Endothelial cell of umbilical vein (primary cell): ENCODE measurements at regions of chr3 and their contacts with region 1.

Region 1: GRCh38 chr3:113838631-113839209 is at the start of gene GRAMD1C:
- DNase-seq: peak; percentile 91
- H3K4me3 ChIP-seq: peak within 1 kb of the TSS; percentile 67 to 80 (median 69)
- H3K27ac ChIP-seq: peak within 1 kb of the TSS; percentile 83
- H3K4me1 ChIP-seq: no peaks in the 10 kb centered on the region
- H3K27me3 ChIP-seq: no peaks in the 10 kb centered on the region
- CTCF ChIP-seq: peak; percentile 85 to 93
- POLR2A ChIP-seq: peak; percentile 61
- total RNA-seq, gene GRAMD1C: 17.0 and 24.0 TPM in 2 replicates

Region 2: DNA sequence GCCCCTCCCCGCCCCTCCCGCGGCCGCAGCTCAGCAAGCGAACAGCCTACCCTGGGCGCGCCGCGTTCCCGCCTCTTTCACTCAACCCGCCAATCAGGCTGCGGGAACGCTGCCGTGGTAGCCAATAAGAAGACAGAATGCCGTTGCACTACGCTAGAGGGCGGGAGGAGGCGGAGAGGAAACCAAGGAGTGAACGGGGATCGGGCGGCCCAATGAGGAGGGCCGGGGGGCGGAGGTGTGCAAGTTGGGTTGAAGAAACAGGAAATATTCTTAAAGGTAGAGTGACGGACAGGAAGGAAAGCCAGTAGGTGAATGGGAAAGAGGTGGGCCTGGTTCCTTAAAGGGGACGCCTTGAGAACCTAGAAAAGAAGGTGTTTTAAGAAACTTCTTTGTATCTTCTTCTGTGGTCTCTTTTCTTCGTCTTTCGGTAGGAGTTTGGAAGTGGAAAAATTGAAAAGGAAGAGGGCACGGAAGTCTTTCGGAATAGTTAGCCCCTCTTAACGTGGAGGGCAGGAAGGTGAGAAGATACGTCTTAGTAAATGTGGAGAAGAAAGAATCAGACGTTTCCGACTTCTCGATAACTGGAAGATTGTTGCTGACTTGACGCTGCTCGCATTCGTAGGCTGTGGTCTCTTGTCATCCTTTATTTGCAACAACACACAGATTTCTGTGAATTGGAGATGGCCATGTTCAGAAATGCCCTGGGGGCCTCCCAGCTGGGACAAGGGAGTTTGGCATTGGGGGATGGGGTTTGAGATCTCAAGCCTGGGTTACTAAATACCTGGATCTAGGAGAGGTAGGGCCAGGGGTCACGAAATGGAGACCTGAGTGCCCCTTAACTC is 141.8 kb before region 1 on chr3:
- CTCF ChIA-PET with region 1: no interaction called
- POLR2A ChIA-PET with region 1: no interaction called
- dilution Hi-C with region 1: no loop called
- intact Hi-C with region 1: loop called (anchors 5 kb)
- DNase-seq: peak; percentile 100
- H3K4me3 ChIP-seq: peak overlapping the region; percentile 37 to 94 (median 90)
- H3K27ac ChIP-seq: peak overlapping the region; percentile 30
- H3K4me1 ChIP-seq: peaks cover 14% of the 10 kb centered on the region
- H3K27me3 ChIP-seq: no peaks in the 10 kb centered on the region
- CTCF ChIP-seq: peak in 1 of 2 donors; percentile 14
- POLR2A ChIP-seq: no peak

Region 3: DNA sequence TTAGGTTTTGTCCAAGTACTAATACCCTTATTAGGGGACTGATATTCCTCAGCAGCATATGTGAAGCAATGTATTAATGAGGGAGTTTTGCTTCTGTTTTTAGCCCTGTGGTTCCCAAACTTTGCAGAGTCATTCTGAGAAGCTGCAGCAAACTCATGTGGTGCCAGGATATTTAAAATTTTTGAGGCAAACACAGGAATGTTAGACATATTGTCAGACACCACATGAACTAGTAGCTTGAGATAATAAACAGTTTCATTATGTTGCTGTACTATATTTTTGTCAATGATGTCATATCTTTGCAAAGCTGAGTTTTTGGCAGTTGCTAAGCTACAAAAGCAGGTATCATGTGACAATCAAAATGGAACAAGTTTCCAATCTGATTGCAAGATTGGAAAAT is 55.3 kb before region 1 on chr3:
- CTCF ChIA-PET with region 1: interaction called, 14 read pairs
- POLR2A ChIA-PET with region 1: no interaction called
- dilution Hi-C with region 1: no loop called
- intact Hi-C with region 1: loop called (anchors 2 kb)
- DNase-seq: peak; percentile 90
- H3K4me3 ChIP-seq: peak overlapping the region in 1 of 3 experiments; percentile 41
- H3K27ac ChIP-seq: peak overlapping the region; percentile 94
- H3K4me1 ChIP-seq: peaks cover 26% of the 10 kb centered on the region
- H3K27me3 ChIP-seq: no peaks in the 10 kb centered on the region
- CTCF ChIP-seq: no peak
- POLR2A ChIP-seq: no peak

Region 4: GRCh38 chr3:113912552-113913236 is 74.0 kb after region 1 on chr3:
- CTCF ChIA-PET with region 1: interaction called, 17 read pairs
- POLR2A ChIA-PET with region 1: no interaction called
- dilution Hi-C with region 1: no loop called
- intact Hi-C with region 1: loop called (anchors 1 kb)
- DNase-seq: peak; percentile 66
- H3K4me3 ChIP-seq: no peak overlapping the region
- H3K27ac ChIP-seq: no peak overlapping the region
- H3K4me1 ChIP-seq: no peaks in the 10 kb centered on the region
- H3K27me3 ChIP-seq: no peaks in the 10 kb centered on the region
- CTCF ChIP-seq: peak; percentile 39 to 43
- POLR2A ChIP-seq: no peak

Region 5: GRCh38 chr3:114456742-114457141 is 618.0 kb after region 1 on chr3:
- CTCF ChIA-PET with region 1: no interaction called
- POLR2A ChIA-PET with region 1: no interaction called
- dilution Hi-C with region 1: no loop called
- intact Hi-C with region 1: no loop called
- DNase-seq: no peak
- H3K4me3 ChIP-seq: no peak overlapping the region
- H3K27ac ChIP-seq: no peak overlapping the region
- H3K4me1 ChIP-seq: peaks cover 5% of the 10 kb centered on the region
- H3K27me3 ChIP-seq: no peaks in the 10 kb centered on the region
- CTCF ChIP-seq: no peak
- POLR2A ChIP-seq: no peak